ENCODE measurements at regions of chr10 and their contacts with region 1.

Region 1: GRCh38 chr10:102167861-102168260 is 15.7 kb downstream of the NOLC1 start:
- DNase-seq: no peak
- CTCF ChIP-seq: no peak

Region 2: GRCh38 chr10:102185811-102186527 is 18.1 kb after region 1 on chr10:
- CTCF ChIA-PET with region 1: interaction called, 42 read pairs
- POLR2A ChIA-PET with region 1: no interaction called
- DNase-seq: no peak
- CTCF ChIP-seq: no peak

Region 3: DNA sequence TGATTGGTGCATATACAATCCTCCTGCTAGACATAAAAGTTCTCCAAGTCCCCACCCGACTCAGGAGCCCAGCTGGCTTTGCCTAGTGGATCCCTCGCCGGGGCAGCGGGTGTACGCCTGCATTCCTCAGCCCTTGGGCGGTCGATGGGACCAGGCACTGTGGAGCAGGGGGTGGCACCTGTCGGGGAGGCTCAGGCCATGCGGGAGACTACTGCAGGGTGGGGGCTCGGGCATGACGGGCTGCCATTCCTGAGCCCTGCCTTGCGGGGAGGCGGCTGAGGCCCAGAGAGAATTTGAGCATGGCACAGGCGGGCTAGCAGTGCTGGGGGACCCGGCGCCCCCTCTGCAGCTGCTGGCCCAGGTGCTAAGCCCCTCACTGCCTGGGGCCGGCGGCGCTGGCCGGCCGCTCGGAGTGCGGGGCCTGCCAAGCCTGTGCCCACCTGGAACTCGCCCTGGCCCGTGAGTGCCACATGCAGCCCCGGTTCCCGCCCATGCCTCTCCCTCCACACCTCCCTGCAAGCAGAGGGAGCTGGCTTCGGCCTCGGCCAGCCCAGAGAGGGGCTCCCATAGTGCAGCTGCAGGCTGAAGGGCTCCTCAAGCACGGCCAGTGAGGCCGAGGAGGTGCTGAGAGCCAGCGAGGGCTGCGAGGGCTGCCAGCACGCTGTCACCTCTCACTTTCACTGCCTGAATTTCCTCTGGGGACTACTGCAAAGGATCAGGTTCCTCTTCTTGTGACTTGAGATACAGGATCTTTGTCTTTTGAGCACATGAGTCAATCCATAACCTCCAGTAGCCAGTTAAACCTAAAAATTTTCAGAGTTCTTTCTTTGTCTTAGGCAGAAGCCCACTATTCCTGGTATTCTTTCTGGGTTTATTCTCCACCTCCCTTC is 33.1 kb after region 1 on chr10:
- CTCF ChIA-PET with region 1: interaction called, 11 read pairs
- POLR2A ChIA-PET with region 1: no interaction called
- DNase-seq: no peak
- CTCF ChIP-seq: no peak

Region 4: GRCh38 chr10:102220612-102221011 is 52.8 kb after region 1 on chr10:
- CTCF ChIA-PET with region 1: interaction called, 23 read pairs
- POLR2A ChIA-PET with region 1: no interaction called
- DNase-seq: no peak
- CTCF ChIP-seq: no peak

Region 5: DNA sequence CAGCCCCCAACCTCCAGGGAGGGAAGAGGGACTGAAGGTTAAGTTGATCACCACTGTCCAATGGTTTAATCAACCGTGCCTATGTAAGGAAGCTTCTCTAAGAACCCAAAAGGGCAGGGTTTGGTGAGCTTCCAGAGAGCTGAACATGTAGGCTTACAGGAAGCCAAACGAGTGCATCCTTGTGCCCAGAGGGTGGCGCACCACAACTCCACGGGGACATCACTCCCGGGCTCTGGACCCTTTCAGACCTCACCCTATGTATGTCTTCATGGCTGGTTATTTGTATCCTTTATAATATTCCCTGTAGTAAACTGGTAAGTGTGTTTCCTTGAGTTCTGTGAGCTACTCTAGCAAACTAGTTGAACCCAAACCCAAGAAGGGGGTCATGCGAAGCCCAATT is 216.2 kb after region 1 on chr10:
- CTCF ChIA-PET with region 1: interaction called, 12 read pairs
- POLR2A ChIA-PET with region 1: no interaction called
- DNase-seq: no peak
- CTCF ChIP-seq: no peak

Region 6: GRCh38 chr10:102408728-102409603 is 241.1 kb after region 1 on chr10:
- CTCF ChIA-PET with region 1: interaction called, 20 read pairs
- POLR2A ChIA-PET with region 1: no interaction called
- DNase-seq: peak; percentile 75
- CTCF ChIP-seq: no peak

Region 7: DNA sequence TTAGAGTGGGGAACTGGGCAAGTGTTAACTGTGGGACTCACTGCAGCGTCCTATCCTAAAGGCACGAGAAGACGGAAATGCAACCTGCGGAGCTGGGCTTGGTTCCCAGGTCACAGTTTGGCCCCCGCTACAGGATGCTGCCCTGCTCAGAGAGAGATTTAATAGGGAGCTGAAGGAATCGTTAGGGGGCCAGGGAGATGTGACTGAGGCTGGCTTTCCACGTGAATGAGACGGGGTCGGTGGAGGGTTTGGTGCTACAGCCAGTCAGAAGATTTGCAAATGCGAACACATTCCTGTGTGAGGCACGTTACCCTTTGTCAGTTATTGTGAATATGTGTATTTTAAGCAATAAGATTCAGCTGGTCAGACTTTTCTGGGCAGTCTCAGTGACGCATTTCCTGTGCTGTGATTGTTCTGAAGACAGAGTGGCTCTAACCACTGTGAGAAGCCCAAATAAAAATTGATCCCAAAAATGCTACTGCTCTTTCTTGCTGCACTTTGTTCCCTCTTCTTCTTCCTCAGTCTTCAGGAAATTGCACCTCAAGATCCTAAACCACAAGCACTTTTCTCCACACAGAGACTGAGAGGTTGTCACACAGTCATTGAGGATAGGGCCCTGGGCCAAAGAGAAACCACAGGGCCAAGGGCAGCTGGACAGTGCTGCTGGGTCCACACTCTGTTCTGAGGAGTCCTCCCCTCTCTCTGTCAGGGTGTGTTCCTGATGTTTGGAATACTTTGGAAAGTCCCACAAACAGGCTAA is 648.1 kb after region 1 on chr10:
- CTCF ChIA-PET with region 1: no interaction called
- POLR2A ChIA-PET with region 1: no interaction called
- DNase-seq: no peak
- CTCF ChIP-seq: no peak